Caco-2 (cell line): ENCODE measurements at regions of chr19 and their contacts with region 1.

Region 1: DNA sequence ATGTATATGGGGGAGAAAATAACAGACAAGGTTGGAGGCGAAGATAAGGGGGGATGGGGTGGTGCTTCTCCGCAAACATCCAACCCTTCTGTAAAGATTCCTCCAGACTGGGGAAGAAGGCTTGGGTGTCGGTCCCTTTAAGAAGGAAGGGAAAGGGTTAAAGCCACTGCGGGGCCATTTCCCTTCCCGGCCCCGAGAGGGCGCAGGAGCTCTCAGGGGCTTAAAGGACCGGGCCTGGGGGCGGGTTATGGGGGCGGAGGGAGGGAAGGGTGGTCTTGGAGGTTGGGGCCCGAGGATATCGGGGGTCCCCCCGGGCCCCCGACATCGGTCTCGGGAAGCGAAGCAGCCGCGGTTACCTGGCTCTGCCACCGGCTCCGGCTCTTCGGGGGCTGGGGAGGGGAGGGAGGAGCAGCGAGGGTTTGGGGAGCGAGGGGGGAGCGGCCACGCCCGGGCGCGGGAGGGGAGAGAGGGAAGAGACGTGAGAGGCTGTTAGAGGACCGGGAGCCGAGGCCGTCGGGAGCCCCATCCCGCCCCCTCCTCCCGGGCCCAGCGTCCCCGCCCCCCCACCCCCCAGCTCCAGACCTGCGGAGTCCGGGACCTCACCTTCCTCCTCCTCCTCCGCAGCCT is 2.8 kb downstream of the TNNT1 start:
- DNase-seq: peak; percentile 69 to 73
- H3K4me3 ChIP-seq: peak overlapping the region; percentile 43
- H3K4me3 Mint-ChIP-seq: peak overlapping the region; percentile 66
- H3K27ac Mint-ChIP-seq: no peak overlapping the region
- H3K4me1 ChIP-seq: peaks cover 12% of the 10 kb centered on the region; the same call in 1 of the 2 replicates
- H3K4me1 Mint-ChIP-seq: peaks cover 20% of the 10 kb centered on the region
- H3K27me3 ChIP-seq: no peaks in the 10 kb centered on the region
- H3K27me3 Mint-ChIP-seq: peaks cover 8% of the 10 kb centered on the region
- CTCF ChIP-seq: peak; percentile 79 to 94

Region 2: DNA sequence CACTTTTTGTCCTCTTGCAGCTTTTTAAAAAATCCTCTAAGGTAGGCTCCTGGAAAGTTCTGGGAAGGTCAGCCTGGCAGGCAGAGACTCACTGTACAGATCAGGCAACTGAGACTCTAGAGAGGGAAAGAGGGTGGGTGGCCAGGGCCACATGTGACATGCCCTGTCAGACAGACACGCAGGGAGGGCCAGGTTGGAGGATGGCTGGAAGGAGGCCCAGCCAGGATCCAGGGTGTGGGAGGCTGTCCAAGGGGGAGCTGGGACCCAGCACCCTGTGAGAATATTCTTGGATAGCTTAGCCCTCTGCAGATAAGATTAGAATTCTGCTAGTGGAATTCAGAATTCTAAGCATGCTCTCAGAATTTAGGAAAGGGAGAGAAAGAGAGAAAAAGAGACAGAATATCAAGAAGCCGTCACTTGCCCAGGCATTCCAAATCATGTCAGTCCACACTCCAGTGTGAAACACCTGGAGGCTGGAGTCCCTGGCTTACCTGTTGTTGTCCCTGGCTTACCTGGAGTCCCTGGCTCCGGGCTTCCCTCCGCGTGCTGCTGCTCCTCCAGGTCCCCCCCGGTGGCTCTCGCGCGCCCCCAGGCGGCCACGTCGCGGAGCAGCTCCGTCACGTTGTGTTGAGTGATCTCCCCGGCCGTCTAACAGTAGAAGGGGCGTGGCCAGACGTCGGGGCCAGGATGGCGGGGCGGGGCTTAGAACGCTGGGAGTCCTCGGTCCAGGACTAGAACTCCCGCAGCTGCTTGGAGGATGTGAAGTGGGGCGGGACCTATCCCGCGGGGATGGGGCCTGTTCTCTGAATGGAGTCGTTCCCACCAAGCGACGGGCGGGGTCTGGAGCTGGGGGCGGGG is 14.2 kb after region 1 on chr19:
- CTCF ChIA-PET with region 1: interaction called, 38 read pairs
- POLR2A ChIA-PET with region 1: interaction called, 5 read pairs
- intact Hi-C with region 1: loop called (anchors 1 kb)
- DNase-seq: peak; percentile 95 to 97
- H3K4me3 ChIP-seq: no peak overlapping the region
- H3K4me3 Mint-ChIP-seq: no peak overlapping the region
- H3K27ac Mint-ChIP-seq: no peak overlapping the region
- H3K4me1 ChIP-seq: peaks cover 16% of the 10 kb centered on the region
- H3K4me1 Mint-ChIP-seq: peaks cover 20% of the 10 kb centered on the region
- H3K27me3 ChIP-seq: no peaks in the 10 kb centered on the region
- H3K27me3 Mint-ChIP-seq: peaks cover 3% of the 10 kb centered on the region
- CTCF ChIP-seq: peak; percentile 97

Region 3: GRCh38 chr19:55166530-55167268 is 20.5 kb after region 1 on chr19 and contains the start of gene DNAAF3:
- CTCF ChIA-PET with region 1: interaction called, 20 read pairs
- POLR2A ChIA-PET with region 1: no interaction called
- intact Hi-C with region 1: loop called (anchors 1 kb)
- DNase-seq: peak; percentile 98 to 99
- H3K4me3 ChIP-seq: peak within 1 kb of the TSS; percentile 73
- H3K4me3 Mint-ChIP-seq: peak within 1 kb of the TSS; percentile 79
- H3K27ac Mint-ChIP-seq: peak within 1 kb of the TSS; percentile 80
- H3K4me1 ChIP-seq: no peaks in the 10 kb centered on the region
- H3K4me1 Mint-ChIP-seq: no peaks in the 10 kb centered on the region
- H3K27me3 ChIP-seq: no peaks in the 10 kb centered on the region
- H3K27me3 Mint-ChIP-seq: peaks cover 15% of the 10 kb centered on the region
- CTCF ChIP-seq: no peak
- total RNA-seq, gene DNAAF3: 0.45 and 0.91 TPM in 2 replicates

Region 4: GRCh38 chr19:55178781-55179599 is 32.8 kb after region 1 on chr19:
- CTCF ChIA-PET with region 1: interaction called, 10 read pairs
- POLR2A ChIA-PET with region 1: no interaction called
- intact Hi-C with region 1: no loop called
- DNase-seq: peak; percentile 77 to 78
- H3K4me3 ChIP-seq: peak overlapping the region; percentile 20
- H3K4me3 Mint-ChIP-seq: peak overlapping the region; percentile 74
- H3K27ac Mint-ChIP-seq: peak overlapping the region; percentile 40
- H3K4me1 ChIP-seq: peaks cover 17% of the 10 kb centered on the region; the same call in 1 of the 2 replicates
- H3K4me1 Mint-ChIP-seq: peaks cover 18% of the 10 kb centered on the region
- H3K27me3 ChIP-seq: no peaks in the 10 kb centered on the region
- H3K27me3 Mint-ChIP-seq: peaks cover 15% of the 10 kb centered on the region
- CTCF ChIP-seq: no peak

Region 5: DNA sequence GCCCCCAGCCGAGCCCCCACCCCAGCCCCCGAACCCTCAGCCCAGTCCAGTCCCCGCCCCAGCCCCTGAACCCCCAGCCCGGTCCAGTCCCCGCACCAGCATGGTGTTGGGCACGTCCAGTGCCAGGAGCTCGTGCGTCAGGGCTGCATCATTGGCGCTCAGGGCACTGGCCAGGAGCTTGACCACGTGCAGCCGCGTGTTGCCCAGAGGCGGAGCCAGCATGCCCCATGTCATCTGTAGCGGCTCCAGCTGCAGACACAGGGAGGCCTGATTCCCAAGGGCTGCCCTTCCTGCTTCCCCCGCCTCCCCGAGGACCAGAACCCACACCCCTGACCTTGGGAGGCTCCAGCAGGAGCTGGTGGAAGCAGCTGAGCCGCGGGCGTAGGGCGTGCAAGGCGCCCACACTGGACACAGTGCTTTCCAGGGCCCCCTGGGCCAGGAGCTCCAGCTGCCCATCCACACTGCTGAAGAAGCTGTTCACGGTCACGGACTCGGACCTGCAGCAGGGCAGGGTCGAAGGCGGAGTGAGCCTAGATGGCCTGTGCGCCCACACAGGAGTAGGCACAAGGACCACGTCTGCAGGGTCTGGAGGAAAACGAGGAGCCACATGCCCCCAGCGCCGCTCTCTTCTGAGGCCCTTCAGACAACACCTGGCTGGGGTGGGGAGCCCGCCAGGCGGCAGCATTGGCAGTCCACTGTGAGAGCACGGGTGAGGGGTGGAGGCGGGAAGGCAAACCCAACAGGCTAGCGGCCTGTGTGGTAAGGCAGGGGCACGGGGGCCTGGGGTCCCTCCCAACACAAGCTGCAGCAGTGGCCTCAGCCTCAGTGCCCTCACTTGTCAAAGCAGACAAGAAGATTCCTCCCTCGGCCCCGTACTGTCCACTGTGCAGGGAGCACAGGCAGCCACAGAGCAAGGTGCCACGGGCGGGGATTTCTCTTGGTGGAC is 95.2 kb after region 1 on chr19:
- CTCF ChIA-PET with region 1: no interaction called
- POLR2A ChIA-PET with region 1: no interaction called
- intact Hi-C with region 1: no loop called
- DNase-seq: no peak
- H3K4me3 ChIP-seq: no peak overlapping the region
- H3K4me3 Mint-ChIP-seq: no peak overlapping the region
- H3K27ac Mint-ChIP-seq: no peak overlapping the region
- H3K4me1 ChIP-seq: no peaks in the 10 kb centered on the region
- H3K4me1 Mint-ChIP-seq: no peaks in the 10 kb centered on the region
- H3K27me3 ChIP-seq: no peaks in the 10 kb centered on the region
- H3K27me3 Mint-ChIP-seq: no peaks in the 10 kb centered on the region
- CTCF ChIP-seq: no peak

Region 6: GRCh38 chr19:55418185-55418584 is 272.0 kb after region 1 on chr19:
- CTCF ChIA-PET with region 1: interaction called, 8 read pairs
- POLR2A ChIA-PET with region 1: no interaction called
- intact Hi-C with region 1: loop called (anchors 1 kb)
- DNase-seq: peak; percentile 77 to 81
- H3K4me3 ChIP-seq: no peak overlapping the region
- H3K4me3 Mint-ChIP-seq: no peak overlapping the region
- H3K27ac Mint-ChIP-seq: no peak overlapping the region
- H3K4me1 ChIP-seq: no peaks in the 10 kb centered on the region
- H3K4me1 Mint-ChIP-seq: peaks cover 6% of the 10 kb centered on the region
- H3K27me3 ChIP-seq: no peaks in the 10 kb centered on the region
- H3K27me3 Mint-ChIP-seq: no peaks in the 10 kb centered on the region
- CTCF ChIP-seq: peak; percentile 76 to 85